ENCODE measurements at regions of chr3 and their contacts with region 1.

Region 1: GRCh38 chr3:73624821-73625665 is at the start of gene PDZRN3:
- DNase-seq: peak; percentile 87
- total RNA-seq, gene PDZRN3: 66.0 TPM

Region 2: GRCh38 chr3:73508330-73508954 is 116.6 kb before region 1 on chr3:
- intact Hi-C with region 1: loop called (anchors 2 kb)
- DNase-seq: no peak

Region 3: DNA sequence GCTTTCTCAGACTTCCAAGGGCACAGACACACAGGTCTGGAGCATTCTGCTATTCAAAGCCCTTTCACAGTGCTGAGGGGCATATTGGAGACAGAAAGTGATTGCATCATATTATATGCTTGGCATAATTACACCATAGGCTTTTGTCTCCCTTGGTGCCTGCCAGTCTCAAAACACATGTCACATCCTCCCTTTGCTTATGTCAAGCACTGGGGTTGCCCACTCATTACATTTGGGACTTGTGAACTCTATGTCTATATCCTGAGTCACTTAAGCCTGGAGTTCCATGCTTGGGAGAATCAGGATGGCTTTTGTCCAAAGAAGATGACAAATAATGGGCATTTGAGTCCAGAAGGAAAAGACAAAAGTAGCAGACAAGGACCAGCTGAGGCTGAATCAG is 12.0 kb after region 1 on chr3:
- intact Hi-C with region 1: no loop called
- DNase-seq: no peak

Region 4: GRCh38 chr3:73661265-73661664 is 36.2 kb after region 1 on chr3:
- intact Hi-C with region 1: loop called (anchors 5 kb)
- DNase-seq: no peak

Region 5: DNA sequence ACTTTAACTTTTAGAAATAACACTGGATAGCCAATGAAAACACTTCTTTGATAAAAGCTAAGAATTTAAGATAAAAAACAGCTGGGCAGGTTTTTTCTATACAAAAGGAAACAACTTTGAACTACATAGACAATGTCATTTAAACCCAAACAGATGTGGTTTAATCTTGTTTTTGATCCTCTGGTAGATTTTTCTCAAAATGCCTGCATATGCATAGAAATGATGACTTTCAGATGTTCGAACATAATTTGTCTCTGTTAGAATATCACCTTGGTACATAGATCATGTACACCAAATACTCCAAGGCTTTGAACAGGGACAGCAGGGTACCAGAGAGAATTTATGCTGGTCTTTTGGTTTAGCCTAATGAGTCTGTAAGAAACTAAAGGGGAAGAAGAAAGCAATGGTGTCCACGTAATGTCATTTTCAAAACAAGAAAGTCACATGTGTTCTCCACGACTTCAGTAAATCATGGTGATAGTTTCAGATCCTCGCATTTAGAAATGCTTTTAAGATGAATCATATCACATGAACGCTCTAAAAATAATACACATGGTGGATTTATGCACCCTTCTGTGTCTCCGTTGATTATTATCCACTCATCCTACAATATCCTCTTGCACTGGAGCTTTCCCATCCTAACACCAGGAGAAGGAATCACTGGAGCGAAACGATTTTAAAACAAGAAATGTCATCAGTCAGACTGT is 159.8 kb after region 1 on chr3:
- intact Hi-C with region 1: loop called (anchors 5 kb)
- DNase-seq: no peak

Region 6: GRCh38 chr3:73848173-73848906 is 223.3 kb after region 1 on chr3:
- intact Hi-C with region 1: loop called (anchors 5 kb)
- DNase-seq: no peak